ENCODE measurements at regions of chr2 and their contacts with region 1.

Region 1: GRCh38 chr2:85642725-85643124 is 25.3 kb downstream of the SFTPB start:
- DNase-seq: no peak
- ATAC-seq: no peak
- H3K4me3 ChIP-seq: no peak overlapping the region
- H3K4me3 Mint-ChIP-seq: no peak overlapping the region
- H3K27ac ChIP-seq: peak overlapping the region; percentile 29
- H3K27ac Mint-ChIP-seq: peak overlapping the region; percentile 12 to 37
- H3K4me1 ChIP-seq: no peaks in the 10 kb centered on the region
- H3K4me1 Mint-ChIP-seq: peaks cover 0 to 15% (median 6%) of the 10 kb centered on the region in 3 donors
- H3K27me3 ChIP-seq: no peaks in the 10 kb centered on the region
- H3K27me3 Mint-ChIP-seq: no peaks in the 10 kb centered on the region

Region 2: GRCh38 chr2:85577386-85578242 is 65.1 kb before region 1 on chr2 and contains the start of gene VAMP8:
- CTCF ChIA-PET with region 1: no interaction called
- POLR2A ChIA-PET with region 1: no interaction called
- DNase-seq: peak; percentile 7 to 75 (median 48)
- ATAC-seq: peak; percentile 85 to 92 (median 88)
- H3K4me3 ChIP-seq: peak within 1 kb of the TSS; percentile 60 to 71
- H3K4me3 Mint-ChIP-seq: peak within 1 kb of the TSS; percentile 93 to 96 (median 94)
- H3K27ac ChIP-seq: peak within 1 kb of the TSS; percentile 55
- H3K27ac Mint-ChIP-seq: peak within 1 kb of the TSS; percentile 86 to 98
- H3K4me1 ChIP-seq: peaks cover 13 to 40% of the 10 kb centered on the region in 2 experiments
- H3K4me1 Mint-ChIP-seq: peaks cover 36 to 50% (median 45%) of the 10 kb centered on the region in 3 donors
- H3K27me3 ChIP-seq: peaks cover 0 to 2% of the 10 kb centered on the region in 2 experiments
- H3K27me3 Mint-ChIP-seq: no peaks in the 10 kb centered on the region
- total RNA-seq, gene VAMP8: 76.2 to 102 (median 84.5) TPM

Region 3: GRCh38 chr2:85619617-85620016 is 23.1 kb before region 1 on chr2:
- CTCF ChIA-PET with region 1: interaction called, 8 to 13 read pairs
- POLR2A ChIA-PET with region 1: interaction called in 1 of 2 experiments, 3 read pairs
- DNase-seq: no peak
- ATAC-seq: no peak
- H3K4me3 ChIP-seq: no peak overlapping the region
- H3K4me3 Mint-ChIP-seq: no peak overlapping the region
- H3K27ac ChIP-seq: no peak overlapping the region
- H3K27ac Mint-ChIP-seq: no peak overlapping the region
- H3K4me1 ChIP-seq: peaks cover 14 to 30% of the 10 kb centered on the region in 2 experiments
- H3K4me1 Mint-ChIP-seq: peaks cover 20 to 38% (median 38%) of the 10 kb centered on the region in 3 donors
- H3K27me3 ChIP-seq: no peaks in the 10 kb centered on the region
- H3K27me3 Mint-ChIP-seq: no peaks in the 10 kb centered on the region

Region 4: GRCh38 chr2:85628658-85629057 is 14.1 kb before region 1 on chr2:
- CTCF ChIA-PET with region 1: interaction called in 1 of 2 experiments, 10 read pairs
- POLR2A ChIA-PET with region 1: no interaction called
- DNase-seq: peak in 1 of 35 experiments; percentile 36
- ATAC-seq: peak in 2 of 4 experiments; percentile 45 to 76
- H3K4me3 ChIP-seq: no peak overlapping the region
- H3K4me3 Mint-ChIP-seq: no peak overlapping the region
- H3K27ac ChIP-seq: peak overlapping the region; percentile 12
- H3K27ac Mint-ChIP-seq: peak overlapping the region; percentile 39 to 79
- H3K4me1 ChIP-seq: peaks cover 0 to 4% of the 10 kb centered on the region in 2 experiments
- H3K4me1 Mint-ChIP-seq: peaks cover 6 to 16% (median 11%) of the 10 kb centered on the region in 3 donors
- H3K27me3 ChIP-seq: no peaks in the 10 kb centered on the region
- H3K27me3 Mint-ChIP-seq: no peaks in the 10 kb centered on the region

Region 5: DNA sequence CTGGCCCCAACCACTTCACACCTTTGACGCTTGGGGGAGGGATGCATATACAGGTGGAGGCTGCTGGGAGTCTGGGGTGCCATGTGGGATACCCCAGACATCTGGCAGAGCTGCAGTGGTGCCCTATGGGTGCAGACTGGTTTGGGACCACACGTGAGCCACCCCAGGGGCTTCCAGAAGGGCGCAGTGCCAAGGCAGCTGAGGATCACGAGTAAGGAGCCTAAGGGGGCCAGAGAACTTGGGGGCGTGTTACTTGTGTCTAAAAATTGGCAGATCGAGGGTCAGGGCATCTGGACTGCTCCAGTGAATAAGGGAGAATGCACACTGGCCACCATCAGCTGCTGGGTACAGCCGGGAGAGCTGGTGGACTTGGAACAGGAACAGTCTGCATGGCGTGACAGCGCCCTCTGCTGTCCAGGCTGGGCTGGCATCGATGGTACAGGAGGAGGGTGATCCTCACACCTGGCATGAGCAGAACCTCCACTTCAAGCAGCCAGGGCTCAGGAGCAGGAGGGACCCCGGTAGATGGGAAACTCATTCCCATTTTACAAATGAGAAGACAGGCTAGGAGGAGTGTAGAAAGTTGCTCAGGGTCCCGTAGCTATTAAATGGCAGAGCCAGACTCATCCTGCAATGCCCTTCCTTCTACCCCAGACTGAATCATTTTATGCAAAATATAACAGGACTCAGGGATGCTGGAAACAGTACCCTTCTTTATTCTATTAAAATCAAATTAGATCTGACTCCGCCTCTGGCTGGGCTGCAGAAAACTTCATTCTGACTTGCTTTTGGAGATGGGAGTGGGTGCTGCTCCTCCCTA is 171.5 kb after region 1 on chr2:
- CTCF ChIA-PET with region 1: interaction called in 1 of 2 experiments, 11 read pairs
- POLR2A ChIA-PET with region 1: no interaction called
- DNase-seq: peak; percentile 48 to 86 (median 72)
- ATAC-seq: peak; percentile 69 to 84 (median 81)
- H3K4me3 ChIP-seq: no peak overlapping the region
- H3K4me3 Mint-ChIP-seq: no peak overlapping the region
- H3K27ac ChIP-seq: no peak overlapping the region
- H3K27ac Mint-ChIP-seq: no peak overlapping the region
- H3K4me1 ChIP-seq: peaks cover 0 to 3% of the 10 kb centered on the region in 2 experiments
- H3K4me1 Mint-ChIP-seq: peaks cover 2 to 8% (median 4%) of the 10 kb centered on the region in 3 donors
- H3K27me3 ChIP-seq: peaks cover 0 to 38% of the 10 kb centered on the region in 2 experiments
- H3K27me3 Mint-ChIP-seq: peaks cover 10 to 21% of the 10 kb centered on the region in 2 donors